OCI-LY7 (cell line): ENCODE measurements at regions of chr19 and their contacts with region 1.

Region 1: DNA sequence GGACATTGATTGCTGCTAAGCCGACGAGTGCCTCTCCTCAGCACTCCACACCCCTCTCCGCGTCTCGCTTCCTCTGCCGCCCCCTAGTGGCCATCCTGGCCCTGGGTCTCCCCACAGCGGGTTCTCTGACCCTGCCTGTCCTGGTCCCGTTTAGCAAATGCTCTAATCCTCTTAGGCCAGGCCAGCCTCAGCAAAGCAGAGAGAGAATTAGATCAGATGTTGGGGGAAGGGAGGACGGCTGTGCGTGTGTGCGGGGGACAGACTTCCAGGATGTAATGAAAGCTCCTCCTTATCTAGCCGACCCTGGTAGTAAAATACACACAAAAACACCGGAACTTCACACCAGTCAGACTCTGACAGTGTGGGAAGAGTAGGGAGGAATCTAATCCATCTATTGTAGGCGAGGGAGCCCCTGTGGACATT is 4.5 kb downstream of the TPRX2 start:
- DNase-seq: peak; percentile 69
- H3K4me3 ChIP-seq: no peak overlapping the region
- H3K27ac ChIP-seq: no peak overlapping the region
- H3K4me1 ChIP-seq: no peaks in the 10 kb centered on the region
- CTCF ChIP-seq: peak; percentile 99

Region 2: GRCh38 chr19:47813304-47814004 is 50.1 kb before region 1 on chr19:
- CTCF ChIA-PET with region 1: no interaction called
- POLR2A ChIA-PET with region 1: no interaction called
- intact Hi-C with region 1: loop called (anchors 10 kb)
- DNase-seq: peak; percentile 66
- H3K4me3 ChIP-seq: no peak overlapping the region
- H3K27ac ChIP-seq: no peak overlapping the region
- H3K4me1 ChIP-seq: no peaks in the 10 kb centered on the region
- CTCF ChIP-seq: peak; percentile 73

Region 3: GRCh38 chr19:48182434-48182833 is 318.9 kb after region 1 on chr19:
- CTCF ChIA-PET with region 1: no interaction called
- POLR2A ChIA-PET with region 1: no interaction called
- intact Hi-C with region 1: no loop called
- DNase-seq: no peak
- H3K4me3 ChIP-seq: no peak overlapping the region
- H3K27ac ChIP-seq: no peak overlapping the region
- H3K4me1 ChIP-seq: peaks cover 40% of the 10 kb centered on the region
- CTCF ChIP-seq: peak; percentile 27; the same call in 1 of the 2 replicates